Pancreas (tissue), 10 donors: ENCODE measurements at regions of chr21 and their contacts with region 1.

Region 1: GRCh38 chr21:35400233-35400957 is 351.3 kb upstream of the RUNX1 start:
- DNase-seq: peak in 3 of 6 donors; percentile 12 to 42 (median 24)
- ATAC-seq: peak; percentile 85 to 99 (median 97)
- H3K4me3 ChIP-seq: no peak overlapping the region
- H3K27ac ChIP-seq: no peak overlapping the region
- H3K4me1 ChIP-seq: no peaks in the 10 kb centered on the region
- H3K27me3 ChIP-seq: no peaks in the 10 kb centered on the region
- CTCF ChIP-seq: peak in 3 of 4 donors; percentile 6 to 35 (median 34)

Region 2: DNA sequence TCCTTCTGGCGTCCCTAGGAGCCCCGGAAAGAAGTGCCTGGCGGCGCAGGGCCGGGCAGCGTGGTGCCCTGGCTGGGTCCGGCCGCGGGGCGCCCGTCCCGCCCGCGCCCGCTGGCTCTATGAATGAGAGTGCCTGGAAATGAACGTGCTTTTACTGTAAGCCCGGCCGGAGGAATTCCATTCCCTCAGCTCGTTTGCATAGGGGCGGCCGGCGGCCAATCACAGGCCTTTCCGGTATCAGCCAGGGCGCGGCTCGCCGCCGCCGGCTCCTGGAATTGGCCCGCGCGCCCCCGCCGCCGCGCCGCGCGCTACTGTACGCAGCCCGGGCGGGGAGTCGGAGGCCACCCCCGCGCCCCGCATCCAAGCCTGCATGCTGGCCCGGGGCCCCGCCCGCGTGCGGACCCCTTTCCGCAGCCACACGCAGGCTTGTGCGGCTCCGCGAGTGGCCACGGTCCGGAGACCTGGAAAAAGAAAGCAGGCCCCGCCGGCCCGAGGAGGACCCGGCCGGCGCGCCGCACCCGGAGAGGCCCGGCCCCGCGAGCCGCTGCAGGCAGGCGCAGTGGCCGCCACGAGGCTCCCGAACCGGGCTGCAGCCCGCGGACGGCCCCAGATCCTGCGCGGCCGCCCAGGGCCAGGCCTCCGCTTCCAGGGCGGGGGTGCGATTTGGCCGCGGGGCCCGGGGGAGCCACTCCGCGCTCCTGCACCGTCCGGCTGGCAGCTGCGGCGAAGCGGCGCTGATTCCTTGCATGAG is 511.7 kb before region 1 on chr21:
- intact Hi-C with region 1: loop called in 1 of 3 experiments (anchors 5 kb)
- DNase-seq: peak; percentile 90 to 96 (median 94)
- ATAC-seq: peak; percentile 74 to 86 (median 82)
- H3K4me3 ChIP-seq: peak overlapping the region; percentile 68 to 79 (median 72)
- H3K27ac ChIP-seq: peak overlapping the region; percentile 74 to 91 (median 86)
- H3K4me1 ChIP-seq: peaks cover 0 to 7% (median 7%) of the 10 kb centered on the region in 3 donors
- H3K27me3 ChIP-seq: peaks cover 0 to 40% (median 15%) of the 10 kb centered on the region in 4 donors
- CTCF ChIP-seq: no peak

Region 3: DNA sequence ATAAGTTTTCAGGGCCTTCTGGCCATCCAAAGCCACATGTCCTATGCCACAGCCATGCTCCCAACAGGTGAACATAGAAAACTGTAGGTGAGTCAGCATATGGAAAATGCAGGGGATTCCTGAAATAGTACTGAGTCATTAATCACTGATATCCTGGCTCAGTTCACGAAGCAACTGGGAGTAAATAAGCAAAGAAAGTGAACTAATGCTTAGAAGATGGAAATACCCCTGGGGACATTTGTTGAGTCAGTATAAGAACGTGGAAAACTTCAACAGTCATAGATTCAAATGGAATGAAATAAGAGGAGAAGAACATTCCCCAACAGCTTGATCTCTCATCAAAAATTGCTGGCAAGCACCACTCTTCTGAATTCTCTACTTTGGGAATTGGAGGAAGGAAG is 202.4 kb before region 1 on chr21:
- intact Hi-C with region 1: no loop called
- DNase-seq: no peak
- ATAC-seq: peak in 3 of 4 donors; percentile 36 to 85 (median 76)
- H3K4me3 ChIP-seq: no peak overlapping the region
- H3K27ac ChIP-seq: peak overlapping the region in 1 of 4 donors; percentile 41
- H3K4me1 ChIP-seq: no peaks in the 10 kb centered on the region
- H3K27me3 ChIP-seq: no peaks in the 10 kb centered on the region
- CTCF ChIP-seq: no peak

Region 4: GRCh38 chr21:35467566-35467965 is 67.2 kb after region 1 on chr21:
- intact Hi-C with region 1: no loop called
- DNase-seq: no peak
- ATAC-seq: no peak
- H3K4me3 ChIP-seq: no peak overlapping the region
- H3K27ac ChIP-seq: no peak overlapping the region
- H3K4me1 ChIP-seq: no peaks in the 10 kb centered on the region
- H3K27me3 ChIP-seq: no peaks in the 10 kb centered on the region
- CTCF ChIP-seq: no peak